ENCODE measurements at regions of chr9 and their contacts with region 1.

Region 1: DNA sequence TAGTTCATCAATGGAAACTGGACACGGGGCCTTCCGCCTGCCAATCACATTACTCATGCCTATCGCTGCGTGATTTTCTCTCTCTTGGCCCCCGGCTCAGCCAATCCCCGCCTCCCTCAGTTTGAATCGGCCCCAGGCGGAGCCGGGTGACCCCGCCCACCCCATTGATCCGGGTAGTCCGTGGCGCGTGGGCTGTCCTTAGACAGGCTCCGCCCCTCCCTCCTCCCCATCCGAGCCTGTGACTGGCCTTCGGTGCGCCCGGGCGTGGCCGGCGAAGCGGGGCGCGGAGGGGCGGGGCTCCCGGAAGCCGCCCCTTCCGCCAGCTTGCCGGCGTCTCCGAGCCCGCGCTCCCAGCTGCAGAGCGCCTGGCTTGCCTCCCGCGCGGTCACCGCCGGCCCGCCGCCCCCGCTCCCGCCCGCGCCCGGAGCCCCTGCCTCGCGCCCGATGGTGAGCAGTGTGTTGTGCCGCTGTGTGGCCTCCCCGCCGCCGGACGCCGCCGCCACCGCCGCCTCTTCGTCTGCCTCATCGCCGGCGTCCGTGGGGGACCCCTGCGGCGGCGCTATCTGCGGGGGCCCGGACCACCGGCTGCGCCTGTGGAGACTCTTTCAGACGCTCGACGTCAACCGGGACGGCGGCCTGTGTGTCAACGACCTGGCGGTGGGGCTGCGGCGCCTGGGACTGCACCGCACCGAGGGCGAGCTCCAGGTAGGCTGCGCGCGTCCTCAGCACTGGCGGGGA is at the start of gene SLC25A25:
- DNase-seq: peak; percentile 99
- H3K4me3 ChIP-seq: peak within 1 kb of the TSS; percentile 93
- H3K27ac ChIP-seq: peak within 1 kb of the TSS; percentile 100
- H3K27me3 ChIP-seq: no peaks in the 10 kb centered on the region
- CTCF ChIP-seq: no peak
- polyA plus RNA-seq, gene SLC25A25: 12.0 and 12.6 TPM in 2 replicates

Region 2: GRCh38 chr9:128006360-128007034 is 61.5 kb before region 1 on chr9:
- CTCF ChIA-PET with region 1: no interaction called
- POLR2A ChIA-PET with region 1: interaction called, 10 read pairs
- DNase-seq: no peak
- H3K4me3 ChIP-seq: no peak overlapping the region
- H3K27ac ChIP-seq: no peak overlapping the region
- H3K27me3 ChIP-seq: no peaks in the 10 kb centered on the region
- CTCF ChIP-seq: no peak

Region 3: DNA sequence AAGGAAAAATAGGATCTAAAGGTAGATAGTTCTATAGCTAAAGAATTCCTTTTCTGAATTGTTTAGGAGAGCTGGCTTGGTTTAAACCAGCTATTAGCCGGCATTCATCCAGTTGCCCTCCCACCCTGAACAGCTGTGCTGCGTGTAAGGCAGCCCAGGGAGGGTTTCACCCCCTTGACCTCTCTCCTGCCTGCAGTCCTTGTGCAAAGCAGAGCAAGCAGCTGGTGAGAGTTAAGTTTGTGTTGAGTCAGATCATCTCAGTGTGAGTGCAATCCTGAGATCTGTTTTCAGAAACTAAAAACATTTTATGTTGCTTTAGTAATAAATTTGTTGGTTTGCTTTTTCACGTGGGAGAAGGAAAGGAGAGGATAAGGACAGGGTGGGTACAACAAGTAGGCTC is 13.0 kb after region 1 on chr9:
- CTCF ChIA-PET with region 1: interaction called, 7 read pairs
- POLR2A ChIA-PET with region 1: interaction called, 25 read pairs
- DNase-seq: peak; percentile 96
- H3K4me3 ChIP-seq: no peak overlapping the region
- H3K27ac ChIP-seq: peak overlapping the region; percentile 93
- H3K27me3 ChIP-seq: no peaks in the 10 kb centered on the region
- CTCF ChIP-seq: no peak

Measured in AG04450 (cell line).